Activated naive CD4-positive, alpha-beta T cell treated with anti-CD3 and anti-CD28 coated beads for 36 hours (primary cell): ENCODE measurements at regions of chr6 and their contacts with region 1.

Region 1: GRCh38 chr6:42978839-42979522 is at the start of gene PEX6:
- DNase-seq: peak; percentile 97
- H3K4me3 Mint-ChIP-seq: peak within 1 kb of the TSS; percentile 95
- H3K27ac Mint-ChIP-seq: peak within 1 kb of the TSS; percentile 99
- H3K4me1 Mint-ChIP-seq: peaks cover 53% of the 10 kb centered on the region
- H3K27me3 Mint-ChIP-seq: no peaks in the 10 kb centered on the region
- total RNA-seq, gene PEX6: 17.1 to 18.2 TPM

Region 2: DNA sequence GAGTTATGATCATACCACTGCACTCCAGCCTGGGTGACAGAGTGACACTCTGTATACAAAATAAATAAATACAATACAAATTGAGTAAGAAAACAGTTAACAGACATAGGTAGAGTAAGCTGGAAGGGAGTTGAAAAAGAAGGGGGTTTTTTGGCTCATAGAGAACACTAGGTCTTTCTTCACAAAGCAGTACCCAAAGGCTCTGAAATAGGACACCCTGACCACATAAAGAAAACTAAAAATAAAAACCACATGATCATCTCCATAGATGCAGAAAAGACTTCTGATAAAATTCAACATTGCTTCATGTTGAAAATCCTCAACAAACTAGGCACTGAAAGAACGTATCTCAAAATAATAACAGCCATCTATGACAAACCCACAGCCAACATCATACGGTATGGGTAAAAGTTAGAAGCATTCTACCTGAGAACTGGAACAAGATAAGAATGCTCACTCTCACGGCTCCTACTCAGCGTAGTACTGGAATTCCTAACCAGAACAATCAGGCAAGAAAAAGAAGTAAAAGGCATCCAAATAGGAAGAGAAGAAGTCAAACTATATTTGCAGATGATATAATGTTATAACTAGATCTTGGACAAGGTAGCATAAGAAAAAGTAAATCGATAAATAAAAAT is 1142.8 kb before region 1 on chr6:
- CTCF ChIA-PET with region 1: no interaction called
- intact Hi-C with region 1: no loop called
- DNase-seq: no peak
- H3K4me3 Mint-ChIP-seq: no peak overlapping the region
- H3K27ac Mint-ChIP-seq: no peak overlapping the region
- H3K4me1 Mint-ChIP-seq: peaks cover 3% of the 10 kb centered on the region
- H3K27me3 Mint-ChIP-seq: no peaks in the 10 kb centered on the region

Region 3: GRCh38 chr6:43021270-43022047 is 42.5 kb after region 1 on chr6 and contains the start of gene RRP36:
- CTCF ChIA-PET with region 1: interaction called, 4 read pairs
- intact Hi-C with region 1: loop called (anchors 1 kb)
- DNase-seq: peak; percentile 79
- H3K4me3 Mint-ChIP-seq: peak within 1 kb of the TSS; percentile 96
- H3K27ac Mint-ChIP-seq: peak within 1 kb of the TSS; percentile 89
- H3K4me1 Mint-ChIP-seq: peaks cover 36% of the 10 kb centered on the region
- H3K27me3 Mint-ChIP-seq: no peaks in the 10 kb centered on the region
- total RNA-seq, gene RRP36: 31.0 to 32.7 TPM

Region 4: DNA sequence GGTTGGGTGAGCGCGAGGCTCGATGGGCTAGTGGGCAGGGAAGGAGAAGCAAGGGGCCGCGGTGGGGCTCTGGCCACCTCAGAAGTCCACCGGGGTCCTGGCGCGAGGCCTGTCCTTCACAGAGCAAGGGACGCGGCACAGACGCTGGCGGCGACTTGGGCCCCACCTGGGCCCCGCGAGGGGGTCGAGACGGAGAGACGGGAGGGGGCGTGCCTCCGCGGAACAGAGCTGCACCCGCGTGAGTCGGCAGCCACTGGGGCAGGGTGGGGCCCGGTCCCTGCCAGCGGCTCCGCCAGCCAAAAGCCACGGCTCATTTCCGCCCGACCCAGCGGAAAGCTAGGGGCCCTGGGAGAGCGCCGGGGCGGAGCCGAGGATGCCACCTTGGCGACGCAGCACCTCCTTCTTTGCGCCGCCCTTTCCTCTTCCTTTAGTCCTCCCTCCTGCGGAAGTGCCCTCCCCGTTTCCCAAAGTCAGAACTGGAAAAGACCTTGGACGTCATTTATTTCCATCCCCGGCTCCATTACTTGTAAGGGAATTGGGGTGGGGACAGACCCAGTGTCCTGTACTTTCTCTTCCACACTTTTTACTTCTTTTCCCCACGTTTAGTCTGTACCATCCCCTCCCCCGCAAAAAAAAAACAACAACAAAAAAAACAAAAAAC is 74.7 kb after region 1 on chr6 and contains the start of gene CUL7:
- CTCF ChIA-PET with region 1: interaction called, 3 read pairs
- intact Hi-C with region 1: loop called (anchors 1 kb)
- DNase-seq: peak; percentile 96
- H3K4me3 Mint-ChIP-seq: peak within 1 kb of the TSS; percentile 99
- H3K27ac Mint-ChIP-seq: peak within 1 kb of the TSS; percentile 90
- H3K4me1 Mint-ChIP-seq: peaks cover 39% of the 10 kb centered on the region
- H3K27me3 Mint-ChIP-seq: no peaks in the 10 kb centered on the region
- total RNA-seq, gene CUL7: 21.9 to 22.1 TPM

Region 5: GRCh38 chr6:43278524-43279078 is 299.6 kb after region 1 on chr6:
- CTCF ChIA-PET with region 1: no interaction called
- intact Hi-C with region 1: no loop called
- DNase-seq: no peak
- H3K4me3 Mint-ChIP-seq: no peak overlapping the region
- H3K27ac Mint-ChIP-seq: no peak overlapping the region
- H3K4me1 Mint-ChIP-seq: peaks cover 6% of the 10 kb centered on the region
- H3K27me3 Mint-ChIP-seq: peaks cover 17% of the 10 kb centered on the region